ENCODE measurements at regions of chr17 and their contacts with region 1.

Region 1: GRCh38 chr17:31533546-31534155 is 142.2 kb downstream of the RAB11FIP4 start:
- DNase-seq: peak; percentile 81
- H3K4me3 ChIP-seq: no peak overlapping the region
- H3K27ac ChIP-seq: peak overlapping the region in 1 of 2 experiments; percentile 66; a peak in 2 of 4 replicates
- H3K4me1 ChIP-seq: peaks cover 11 to 16% of the 10 kb centered on the region in 2 experiments; a peak in 3 of 4 replicates
- H3K27me3 ChIP-seq: no peaks in the 10 kb centered on the region
- CTCF ChIP-seq: peak; percentile 55
- EP300 ChIP-seq: no peak; a peak in 1 of 4 replicates
- RAD21 ChIP-seq: peak; percentile 67

Region 2: DNA sequence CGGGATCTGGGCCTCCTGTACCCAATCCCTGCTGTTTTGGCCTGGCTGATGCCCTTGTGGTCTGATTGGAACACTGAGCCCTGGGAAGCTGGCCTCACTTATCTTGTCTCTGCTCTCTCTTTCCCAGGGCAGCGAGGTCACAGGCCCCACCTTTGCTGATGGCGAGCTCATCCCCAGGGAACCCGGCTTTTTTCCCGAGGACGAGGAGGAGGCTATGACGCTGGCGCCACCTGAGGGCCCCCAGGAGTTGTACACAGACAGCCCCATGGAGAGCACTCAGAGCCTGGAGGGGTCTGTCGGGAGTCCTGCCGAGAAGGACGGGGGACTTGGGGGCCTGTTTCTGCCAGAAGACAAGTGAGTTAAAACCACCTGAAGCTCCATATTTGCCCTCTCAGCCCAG is 16.1 kb before region 1 on chr17:
- CTCF ChIA-PET with region 1: interaction called, 15 read pairs
- POLR2A ChIA-PET with region 1: interaction called, 5 read pairs
- DNase-seq: peak; percentile 80
- H3K4me3 ChIP-seq: no peak overlapping the region
- H3K27ac ChIP-seq: no peak overlapping the region; a peak in 1 of 4 replicates
- H3K4me1 ChIP-seq: peaks cover 0 to 27% of the 10 kb centered on the region in 2 experiments; a peak in 1 of 4 replicates
- H3K27me3 ChIP-seq: no peaks in the 10 kb centered on the region
- CTCF ChIP-seq: peak; percentile 41
- EP300 ChIP-seq: no peak
- RAD21 ChIP-seq: peak; percentile 79

Region 3: DNA sequence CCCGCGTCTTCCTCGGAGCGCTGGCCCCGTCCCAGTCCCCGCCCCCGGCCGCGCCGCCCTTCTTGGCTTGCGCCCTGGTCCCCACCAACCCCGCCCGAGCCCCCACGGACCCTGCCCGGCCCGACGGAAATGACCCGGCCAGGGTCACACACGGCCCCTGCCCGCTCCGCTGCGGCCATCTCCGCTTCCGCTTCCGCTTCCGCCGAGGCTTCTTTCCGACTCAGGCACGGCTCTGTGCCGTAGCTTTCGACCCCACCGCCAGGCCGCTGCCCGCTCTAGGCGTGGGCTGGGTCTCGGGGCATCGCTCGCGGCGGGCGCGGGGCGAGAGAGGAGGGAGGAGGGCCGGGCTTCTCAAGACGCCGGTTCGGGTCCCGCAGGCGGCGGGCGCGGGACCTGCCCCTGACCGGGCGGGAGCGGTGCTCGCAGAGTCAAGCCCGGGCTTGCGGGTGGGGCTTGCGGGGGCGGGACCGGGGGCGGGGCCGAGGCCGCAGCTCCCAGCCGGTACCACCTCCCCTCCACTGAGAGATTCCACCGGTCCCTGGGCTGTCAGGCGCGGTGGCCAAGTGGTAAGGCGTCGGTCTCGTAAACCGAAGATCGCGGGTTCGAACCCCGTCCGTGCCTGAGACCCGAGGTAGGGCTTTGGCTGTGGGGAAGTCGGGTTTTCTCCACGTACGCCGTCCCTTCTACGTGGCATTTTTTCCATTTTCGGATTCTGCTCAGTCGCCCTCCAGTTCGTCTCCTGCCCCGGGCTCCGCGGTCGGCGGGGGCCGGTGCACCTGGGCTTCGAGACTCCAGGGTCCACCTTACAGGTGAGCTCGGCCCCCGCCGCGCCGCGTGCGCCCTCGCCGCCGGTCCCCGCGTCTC is 16.1 kb after region 1 on chr17:
- CTCF ChIA-PET with region 1: interaction called, 10 read pairs
- POLR2A ChIA-PET with region 1: interaction called, 4 read pairs
- DNase-seq: peak; percentile 98
- H3K4me3 ChIP-seq: peak overlapping the region; percentile 79 to 93
- H3K27ac ChIP-seq: peak overlapping the region; percentile 74 to 92
- H3K4me1 ChIP-seq: no peaks in the 10 kb centered on the region
- H3K27me3 ChIP-seq: no peaks in the 10 kb centered on the region
- CTCF ChIP-seq: no peak
- EP300 ChIP-seq: peak in 1 of 2 experiments; percentile 15; a peak in 2 of 4 replicates
- RAD21 ChIP-seq: no peak

Region 4: GRCh38 chr17:31599000-31599571 is 65.4 kb after region 1 on chr17:
- CTCF ChIA-PET with region 1: no interaction called
- POLR2A ChIA-PET with region 1: no interaction called
- DNase-seq: no peak
- H3K4me3 ChIP-seq: no peak overlapping the region
- H3K27ac ChIP-seq: no peak overlapping the region
- H3K4me1 ChIP-seq: peaks cover 3 to 31% of the 10 kb centered on the region in 2 experiments; a peak in 3 of 4 replicates
- H3K27me3 ChIP-seq: no peaks in the 10 kb centered on the region
- CTCF ChIP-seq: no peak
- EP300 ChIP-seq: no peak
- RAD21 ChIP-seq: no peak

Measured in SK-N-SH (cell line).